Activated CD4-positive, alpha-beta T cell treated with anti-CD3 and anti-CD28 coated beads for 36 hours (primary cell): ENCODE measurements at regions of chr2 and their contacts with region 1.

Region 1: DNA sequence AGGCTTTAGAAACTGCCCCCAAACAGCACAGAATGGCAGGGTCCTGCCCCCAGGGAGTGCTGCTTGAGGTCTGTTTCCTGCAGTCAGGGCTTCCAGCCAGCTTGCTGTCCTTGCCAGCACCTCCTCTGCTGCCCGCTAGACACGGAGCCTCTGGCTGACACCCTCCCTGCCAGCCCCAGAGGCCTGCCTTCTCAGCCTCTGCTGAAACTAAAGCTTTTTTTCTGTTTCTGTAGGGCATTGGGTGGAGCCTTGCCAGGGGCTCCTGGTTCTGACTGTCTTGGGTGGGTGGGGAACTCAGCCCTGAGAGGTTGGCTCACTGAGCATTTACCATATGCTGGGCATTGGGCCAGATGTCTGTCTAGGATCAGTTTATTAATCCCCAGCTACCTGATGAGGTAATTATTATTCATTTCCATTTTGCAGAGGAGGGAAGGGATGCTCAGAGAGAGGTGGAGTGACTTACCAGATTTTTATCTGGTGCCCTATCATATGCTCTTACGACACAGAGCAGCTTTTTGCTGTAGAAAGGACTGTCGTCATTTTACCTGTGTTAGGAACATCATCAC is 35.4 kb downstream of the INPP4A start:
- DNase-seq: peak; percentile 78
- ATAC-seq: peak; percentile 77
- H3K4me3 Mint-ChIP-seq: peak overlapping the region; percentile 6
- H3K27ac Mint-ChIP-seq: peak overlapping the region; percentile 85
- H3K4me1 Mint-ChIP-seq: peaks cover 98% of the 10 kb centered on the region
- H3K27me3 Mint-ChIP-seq: no peaks in the 10 kb centered on the region

Region 2: GRCh38 chr2:98419977-98420725 is 59.9 kb before region 1 on chr2:
- CTCF ChIA-PET with region 1: interaction called, 3 read pairs
- POLR2A ChIA-PET with region 1: no interaction called
- intact Hi-C with region 1: loop called in 1 of 2 experiments (anchors 5 kb)
- DNase-seq: no peak
- ATAC-seq: no peak
- H3K4me3 Mint-ChIP-seq: no peak overlapping the region
- H3K27ac Mint-ChIP-seq: no peak overlapping the region
- H3K4me1 Mint-ChIP-seq: peaks cover 8% of the 10 kb centered on the region
- H3K27me3 Mint-ChIP-seq: no peaks in the 10 kb centered on the region

Region 3: DNA sequence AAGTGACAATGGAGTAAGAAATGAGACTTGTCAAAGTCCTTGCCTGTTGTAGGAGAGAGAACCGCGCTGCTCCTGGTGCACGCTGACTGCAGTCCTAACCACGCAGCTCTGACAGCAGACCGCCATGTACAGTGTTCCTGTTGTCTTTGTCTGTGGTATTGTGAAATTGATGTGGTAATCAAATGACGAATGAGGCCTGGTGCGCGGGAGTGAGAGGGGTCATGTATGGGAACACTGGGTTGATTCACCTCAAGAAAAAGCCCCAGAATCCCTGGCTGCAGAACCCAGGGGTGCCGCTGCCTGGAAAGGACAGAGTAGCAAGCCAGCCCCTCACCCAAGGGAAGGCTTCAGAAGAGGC is 28.6 kb after region 1 on chr2:
- CTCF ChIA-PET with region 1: interaction called, 3 read pairs
- POLR2A ChIA-PET with region 1: interaction called, 5 read pairs
- intact Hi-C with region 1: loop called in 1 of 2 experiments (anchors 2 kb)
- DNase-seq: peak; percentile 73
- ATAC-seq: peak; percentile 72
- H3K4me3 Mint-ChIP-seq: no peak overlapping the region
- H3K27ac Mint-ChIP-seq: peak overlapping the region; percentile 84
- H3K4me1 Mint-ChIP-seq: peaks cover 96% of the 10 kb centered on the region
- H3K27me3 Mint-ChIP-seq: no peaks in the 10 kb centered on the region